Calu3 (cell line): ENCODE measurements at regions of chr19 and their contacts with region 1.

Region 1: GRCh38 chr19:46860125-46860845 is 512 bp upstream of the ARHGAP35 start:
- DNase-seq: peak; percentile 99
- H3K4me3 Mint-ChIP-seq: no peak overlapping the region
- H3K27ac Mint-ChIP-seq: peak overlapping the region; percentile 72
- H3K4me1 Mint-ChIP-seq: peaks cover 20% of the 10 kb centered on the region
- H3K27me3 Mint-ChIP-seq: no peaks in the 10 kb centered on the region
- CTCF ChIP-seq: no peak

Region 2: GRCh38 chr19:46904114-46905060 is 44.1 kb after region 1 on chr19:
- CTCF ChIA-PET with region 1: interaction called, 5 read pairs
- intact Hi-C with region 1: loop called (anchors 5 kb)
- DNase-seq: no peak
- H3K4me3 Mint-ChIP-seq: no peak overlapping the region
- H3K27ac Mint-ChIP-seq: no peak overlapping the region
- H3K4me1 Mint-ChIP-seq: peaks cover 57% of the 10 kb centered on the region
- H3K27me3 Mint-ChIP-seq: no peaks in the 10 kb centered on the region
- CTCF ChIP-seq: no peak

Region 3: DNA sequence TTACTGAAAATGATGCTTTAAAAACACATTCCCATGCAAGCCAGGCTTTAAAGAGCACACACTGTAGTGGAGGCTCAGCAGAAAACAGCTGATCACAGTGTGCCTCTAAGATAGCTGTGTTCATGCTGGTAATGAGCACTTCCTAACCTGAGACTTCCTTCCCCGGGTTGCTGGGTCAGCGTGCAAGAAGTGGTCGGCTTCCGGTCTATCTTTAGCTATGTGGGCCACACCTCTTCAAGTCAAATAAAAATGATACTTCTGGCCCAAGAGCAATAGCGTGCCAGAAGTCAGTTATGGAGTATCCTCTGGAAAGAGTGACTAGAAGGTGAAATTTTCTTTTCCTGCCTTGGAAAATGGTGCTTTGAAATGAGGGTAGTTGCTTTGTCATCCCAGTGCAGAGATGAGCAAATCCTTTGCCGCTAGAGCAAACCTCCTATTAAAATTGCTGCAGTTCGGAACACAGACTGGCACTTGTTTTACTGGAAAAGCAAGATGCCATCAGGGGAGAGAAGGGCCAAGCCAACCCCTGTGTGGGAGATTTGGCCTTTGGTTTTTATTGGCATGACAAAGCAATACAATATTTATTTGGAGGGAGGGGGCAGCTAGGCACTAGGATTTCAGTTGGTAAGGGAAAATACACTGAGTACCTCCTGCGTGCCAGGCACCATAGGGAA is 64.7 kb after region 1 on chr19:
- CTCF ChIA-PET with region 1: interaction called, 15 read pairs
- intact Hi-C with region 1: loop called (anchors 5 kb)
- DNase-seq: peak; percentile 50
- H3K4me3 Mint-ChIP-seq: peak overlapping the region; percentile 67
- H3K27ac Mint-ChIP-seq: peak overlapping the region; percentile 91
- H3K4me1 Mint-ChIP-seq: peaks cover 45% of the 10 kb centered on the region
- H3K27me3 Mint-ChIP-seq: no peaks in the 10 kb centered on the region
- CTCF ChIP-seq: no peak

Region 4: GRCh38 chr19:46975925-46976782 is 115.9 kb after region 1 on chr19:
- CTCF ChIA-PET with region 1: interaction called, 4 read pairs
- intact Hi-C with region 1: loop called (anchors 5 kb)
- DNase-seq: peak; percentile 73
- H3K4me3 Mint-ChIP-seq: peak overlapping the region; percentile 4
- H3K27ac Mint-ChIP-seq: peak overlapping the region; percentile 21
- H3K4me1 Mint-ChIP-seq: peaks cover 33% of the 10 kb centered on the region
- H3K27me3 Mint-ChIP-seq: no peaks in the 10 kb centered on the region
- CTCF ChIP-seq: no peak

Region 5: GRCh38 chr19:46990991-46991676 is 130.8 kb after region 1 on chr19:
- CTCF ChIA-PET with region 1: interaction called, 17 read pairs
- intact Hi-C with region 1: loop called (anchors 1 kb)
- DNase-seq: peak; percentile 85
- H3K4me3 Mint-ChIP-seq: no peak overlapping the region
- H3K27ac Mint-ChIP-seq: no peak overlapping the region
- H3K4me1 Mint-ChIP-seq: no peaks in the 10 kb centered on the region
- H3K27me3 Mint-ChIP-seq: no peaks in the 10 kb centered on the region
- CTCF ChIP-seq: peak; percentile 80

Region 6: GRCh38 chr19:47190167-47190727 is 330.0 kb after region 1 on chr19:
- CTCF ChIA-PET with region 1: no interaction called
- intact Hi-C with region 1: no loop called
- DNase-seq: peak; percentile 87
- H3K4me3 Mint-ChIP-seq: peak overlapping the region; percentile 21
- H3K27ac Mint-ChIP-seq: peak overlapping the region; percentile 50
- H3K4me1 Mint-ChIP-seq: peaks cover 58% of the 10 kb centered on the region
- H3K27me3 Mint-ChIP-seq: no peaks in the 10 kb centered on the region
- CTCF ChIP-seq: no peak